Activated CD4-positive, alpha-beta memory T cell treated with anti-CD3 and anti-CD28 coated beads for 36 hours (primary cell): ENCODE measurements at regions of chr14 and their contacts with region 1.

Region 1: GRCh38 chr14:59688224-59689170 is 111.9 kb upstream of the CCDC175 start:
- DNase-seq: peak; percentile 36
- H3K4me3 Mint-ChIP-seq: no peak overlapping the region
- H3K27ac Mint-ChIP-seq: no peak overlapping the region
- H3K4me1 Mint-ChIP-seq: no peaks in the 10 kb centered on the region
- H3K27me3 Mint-ChIP-seq: peaks cover 3% of the 10 kb centered on the region

Region 2: DNA sequence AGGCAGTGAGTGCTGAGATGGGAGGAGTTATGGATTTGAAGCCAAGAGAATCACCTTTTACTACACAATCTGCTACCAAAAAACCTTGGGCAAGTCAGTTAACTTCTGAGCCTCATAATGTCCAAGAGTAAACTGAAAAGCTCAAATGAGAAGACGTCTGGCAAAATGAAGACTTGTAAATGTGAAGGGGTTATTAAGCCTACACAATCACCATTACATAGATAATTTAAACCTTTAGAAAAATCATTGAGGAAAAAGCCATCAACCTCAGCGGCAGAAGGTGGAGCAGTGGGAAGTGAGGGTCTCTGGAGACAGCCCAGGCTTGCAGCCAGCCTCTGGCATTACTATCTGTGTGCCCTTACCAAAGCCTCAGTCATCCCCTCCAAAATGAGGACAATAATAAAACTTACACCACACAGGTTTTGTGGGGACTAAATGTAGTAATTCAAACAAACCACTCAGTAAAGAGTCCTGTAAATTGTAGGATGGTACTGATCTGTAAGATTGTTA is 61.4 kb before region 1 on chr14:
- CTCF ChIA-PET with region 1: no interaction called
- POLR2A ChIA-PET with region 1: no interaction called
- intact Hi-C with region 1: loop called (anchors 2 kb)
- DNase-seq: no peak
- H3K4me3 Mint-ChIP-seq: no peak overlapping the region
- H3K27ac Mint-ChIP-seq: no peak overlapping the region
- H3K4me1 Mint-ChIP-seq: peaks cover 3% of the 10 kb centered on the region
- H3K27me3 Mint-ChIP-seq: peaks cover 42% of the 10 kb centered on the region